ENCODE measurements at regions of chr4 and their contacts with region 1.

Region 1: GRCh38 chr4:168942985-168943384 is 67.1 kb downstream of the CBR4 start:
- DNase-seq: peak in 1 of 2 experiments; percentile 51
- H3K4me3 ChIP-seq: no peak overlapping the region
- H3K27ac ChIP-seq: no peak overlapping the region
- H3K4me1 ChIP-seq: no peaks in the 10 kb centered on the region
- H3K27me3 ChIP-seq: no peaks in the 10 kb centered on the region
- CTCF ChIP-seq: peak in 2 of 3 experiments; percentile 61 to 71; a peak in 3 of 4 replicates
- EP300 ChIP-seq: no peak
- POLR2A ChIP-seq: no peak
- RAD21 ChIP-seq: peak; percentile 66 to 69

Region 2: DNA sequence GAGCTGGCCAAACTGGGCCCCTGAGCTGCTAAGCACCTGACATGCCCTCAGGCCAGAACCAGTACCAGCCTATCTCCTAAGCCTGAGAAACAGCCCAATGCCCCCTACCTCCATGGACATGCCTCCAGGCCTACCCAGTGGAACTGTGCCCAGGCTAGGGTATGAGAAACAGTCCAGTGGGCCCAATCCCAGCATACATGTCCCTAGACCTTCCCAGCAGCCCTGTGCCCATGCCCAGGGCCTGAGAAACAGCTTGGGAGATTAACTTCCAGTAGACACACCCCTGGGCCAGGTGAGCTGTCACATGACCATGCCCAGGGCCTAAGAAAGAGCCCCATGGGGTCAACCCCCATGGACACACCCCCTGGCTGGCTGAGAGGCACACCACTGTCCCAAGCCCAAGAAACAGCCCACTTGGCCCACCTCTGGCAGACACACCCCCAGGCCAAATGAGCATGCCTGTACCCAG is 11.8 kb before region 1 on chr4:
- CTCF ChIA-PET with region 1: interaction called, 26 read pairs
- POLR2A ChIA-PET with region 1: no interaction called
- DNase-seq: no peak
- H3K4me3 ChIP-seq: no peak overlapping the region
- H3K27ac ChIP-seq: no peak overlapping the region
- H3K4me1 ChIP-seq: no peaks in the 10 kb centered on the region
- H3K27me3 ChIP-seq: no peaks in the 10 kb centered on the region
- CTCF ChIP-seq: no peak
- EP300 ChIP-seq: no peak
- POLR2A ChIP-seq: no peak
- RAD21 ChIP-seq: no peak

Measured in H1 (cell line).